ENCODE measurements at regions of chr1 and their contacts with region 1.

Region 1: GRCh38 chr1:199759268-199759724 is 268.2 kb upstream of the NR5A2 start:
- DNase-seq: peak; percentile 70 to 89
- H3K4me3 ChIP-seq: peak overlapping the region; percentile 37; the same call in 1 of the 2 replicates
- H3K27ac ChIP-seq: peak overlapping the region; percentile 91
- H3K4me1 ChIP-seq: peaks cover 28% of the 10 kb centered on the region
- H3K27me3 ChIP-seq: no peaks in the 10 kb centered on the region
- CTCF ChIP-seq: no peak

Region 2: GRCh38 chr1:199510314-199510713 is 249.0 kb before region 1 on chr1:
- CTCF ChIA-PET with region 1: no interaction called
- POLR2A ChIA-PET with region 1: no interaction called
- intact Hi-C with region 1: no loop called
- DNase-seq: no peak
- H3K4me3 ChIP-seq: no peak overlapping the region
- H3K27ac ChIP-seq: no peak overlapping the region
- H3K4me1 ChIP-seq: no peaks in the 10 kb centered on the region
- H3K27me3 ChIP-seq: no peaks in the 10 kb centered on the region
- CTCF ChIP-seq: no peak

Region 3: GRCh38 chr1:199742547-199742946 is 16.7 kb before region 1 on chr1:
- CTCF ChIA-PET with region 1: no interaction called
- POLR2A ChIA-PET with region 1: no interaction called
- intact Hi-C with region 1: loop called (anchors 1 kb)
- DNase-seq: peak; percentile 30 to 70
- H3K4me3 ChIP-seq: no peak overlapping the region
- H3K27ac ChIP-seq: peak overlapping the region; percentile 71
- H3K4me1 ChIP-seq: peaks cover 15% of the 10 kb centered on the region
- H3K27me3 ChIP-seq: no peaks in the 10 kb centered on the region
- CTCF ChIP-seq: no peak

Region 4: GRCh38 chr1:199786695-199787094 is 27.4 kb after region 1 on chr1:
- CTCF ChIA-PET with region 1: no interaction called
- POLR2A ChIA-PET with region 1: no interaction called
- intact Hi-C with region 1: no loop called
- DNase-seq: no peak
- H3K4me3 ChIP-seq: no peak overlapping the region
- H3K27ac ChIP-seq: no peak overlapping the region
- H3K4me1 ChIP-seq: peaks cover 28% of the 10 kb centered on the region
- H3K27me3 ChIP-seq: no peaks in the 10 kb centered on the region
- CTCF ChIP-seq: no peak